Activated T-helper 1 cell treated with anti-CD3 and anti-CD28 coated beads, Interleukin-12 subunit alpha, Interleukin-12 subunit beta, Interleukin-2, Interleukin-4 antibody, amounts not matched to agents 30 ng/mL and 10 ng/mL and 1 ng/mL, durations not matched to agents 14 hours and 24 hours and 36 hours (primary cell): ENCODE measurements at regions of chr12 and their contacts with region 1.

Region 1: GRCh38 chr12:54005853-54006686 is 2.7 kb upstream of the HOXC8 start:
- DNase-seq: peak; percentile 76
- H3K4me3 Mint-ChIP-seq: peak overlapping the region; percentile 83
- H3K27ac Mint-ChIP-seq: no peak overlapping the region
- H3K4me1 Mint-ChIP-seq: peaks cover 32% of the 10 kb centered on the region
- H3K27me3 Mint-ChIP-seq: peaks cover 92% of the 10 kb centered on the region

Region 2: DNA sequence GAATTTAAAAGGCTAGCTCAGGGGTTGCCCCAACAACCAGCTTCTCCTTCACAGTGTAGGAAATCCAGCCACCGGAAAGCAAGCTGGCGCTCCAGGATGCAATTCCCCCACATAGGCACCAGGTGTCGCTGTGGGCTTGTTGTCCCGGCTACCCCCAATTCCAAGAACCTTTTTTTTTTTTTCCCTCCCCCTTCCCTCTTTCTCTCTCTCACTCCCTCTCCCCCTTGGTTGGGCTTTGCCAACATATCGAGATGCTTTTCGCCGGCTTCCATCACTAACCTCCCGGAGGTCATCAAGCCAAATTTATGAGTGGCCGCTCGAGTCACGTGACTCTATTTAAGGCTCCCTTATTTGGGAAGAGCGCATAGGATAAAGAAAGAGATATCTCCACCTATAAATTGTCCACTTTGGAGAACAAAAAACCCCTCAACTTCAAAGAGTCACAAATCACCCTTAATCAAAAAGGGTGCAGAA is 26.6 kb after region 1 on chr12 and contains the start of gene HOXC5:
- intact Hi-C with region 1: loop called (anchors 1 kb)
- DNase-seq: peak; percentile 48
- H3K4me3 Mint-ChIP-seq: peak within 1 kb of the TSS; percentile 49
- H3K27ac Mint-ChIP-seq: peak within 1 kb of the TSS; percentile 52
- H3K4me1 Mint-ChIP-seq: peaks cover 20% of the 10 kb centered on the region
- H3K27me3 Mint-ChIP-seq: peaks cover 79% of the 10 kb centered on the region
- total RNA-seq, gene HOXC5: not detected in 2 replicates

Region 3: DNA sequence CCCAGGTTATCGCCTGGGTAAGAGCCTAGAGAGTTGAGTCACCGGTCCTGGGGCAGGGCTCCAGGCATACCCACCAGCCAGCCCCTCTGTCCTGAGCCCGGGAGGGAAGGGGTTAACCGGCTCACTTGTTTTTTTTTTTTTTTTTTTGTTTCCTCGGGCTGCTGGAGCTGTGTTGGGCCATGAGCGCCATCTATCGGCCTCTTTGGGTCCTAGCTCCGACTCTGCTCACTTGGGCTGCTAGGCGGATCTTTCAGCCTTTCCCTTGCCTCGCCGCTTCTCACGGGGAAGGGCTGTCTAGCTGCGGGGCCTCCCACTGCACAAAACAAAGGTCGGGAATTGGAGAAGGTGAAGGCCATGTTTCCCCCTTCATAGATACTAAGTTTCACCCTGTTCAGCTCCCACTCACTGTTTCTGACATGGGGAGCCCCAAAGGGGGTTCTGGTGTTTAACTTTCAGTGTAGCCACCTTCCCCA is 185.5 kb after region 1 on chr12:
- intact Hi-C with region 1: loop called (anchors 1 kb)
- DNase-seq: peak; percentile 64
- H3K4me3 Mint-ChIP-seq: no peak overlapping the region
- H3K27ac Mint-ChIP-seq: no peak overlapping the region
- H3K4me1 Mint-ChIP-seq: peaks cover 32% of the 10 kb centered on the region
- H3K27me3 Mint-ChIP-seq: peaks cover 43% of the 10 kb centered on the region

Region 4: DNA sequence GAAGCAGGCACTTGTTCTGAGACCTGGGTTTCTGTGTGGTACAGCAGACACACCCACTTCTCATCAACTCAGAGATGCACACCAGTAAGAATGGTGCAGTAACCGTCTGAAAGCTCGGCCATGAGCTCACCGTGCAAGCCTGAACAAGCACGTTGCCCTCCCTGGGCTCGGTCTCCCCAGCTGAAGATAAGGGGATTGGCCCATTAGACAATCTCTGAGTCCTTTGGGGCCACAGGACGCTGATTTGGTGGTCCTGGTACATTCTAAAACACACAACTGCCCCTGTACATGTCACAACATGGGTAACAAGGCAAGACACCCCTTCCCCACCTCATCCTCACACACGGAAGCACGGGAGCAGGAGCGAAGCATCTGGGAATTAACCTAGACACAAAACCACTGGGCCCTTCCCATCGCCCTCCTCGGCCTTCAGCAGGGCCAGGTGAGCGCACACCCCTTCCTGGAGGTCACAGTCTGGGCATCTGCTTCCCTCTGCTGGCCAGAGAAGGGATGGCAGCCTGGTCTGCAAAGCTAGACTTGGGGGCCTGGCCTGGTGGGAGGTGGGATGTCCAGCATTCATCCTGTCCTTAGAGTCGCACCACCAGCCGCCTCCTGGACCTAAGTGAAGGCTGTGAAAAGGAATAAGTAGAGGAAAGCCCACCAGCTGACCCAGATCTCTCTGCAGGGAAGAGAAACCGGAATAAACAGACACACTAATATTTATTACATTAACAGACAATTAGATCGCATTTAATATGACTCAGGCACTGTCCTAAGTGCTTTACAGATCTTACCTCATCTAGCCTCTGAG is 201.6 kb after region 1 on chr12:
- intact Hi-C with region 1: loop called (anchors 1 kb)
- DNase-seq: peak; percentile 66
- H3K4me3 Mint-ChIP-seq: no peak overlapping the region
- H3K27ac Mint-ChIP-seq: no peak overlapping the region
- H3K4me1 Mint-ChIP-seq: no peaks in the 10 kb centered on the region
- H3K27me3 Mint-ChIP-seq: peaks cover 30% of the 10 kb centered on the region

Region 5: DNA sequence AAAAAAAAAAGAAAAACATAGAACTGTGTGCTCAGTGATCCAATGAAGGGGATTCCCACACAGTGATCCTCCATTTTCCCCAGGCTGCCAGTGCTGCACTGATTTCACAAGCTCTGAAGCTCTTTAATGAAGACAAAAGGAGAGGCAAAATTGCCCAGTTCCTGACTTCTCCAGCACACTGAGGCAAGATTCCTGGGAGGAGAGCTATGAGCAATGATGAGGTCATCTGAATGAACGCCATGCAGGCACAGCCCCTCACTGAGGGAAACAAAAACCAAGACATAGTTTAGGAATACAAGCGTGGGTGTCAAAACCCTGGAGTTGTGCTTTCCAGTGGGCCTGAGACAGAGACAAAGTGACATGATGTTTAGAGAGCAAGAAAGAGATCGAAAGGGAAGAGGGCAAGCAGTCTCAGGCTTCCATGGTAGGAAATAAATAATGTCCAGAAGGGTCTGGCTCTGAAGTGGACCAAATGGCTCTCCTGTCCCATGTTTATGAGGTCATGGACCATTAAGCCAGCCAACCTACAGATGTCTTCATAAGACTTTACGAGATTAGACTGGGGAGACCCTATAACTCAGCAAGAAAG is 223.6 kb after region 1 on chr12:
- intact Hi-C with region 1: no loop called
- DNase-seq: no peak
- H3K4me3 Mint-ChIP-seq: no peak overlapping the region
- H3K27ac Mint-ChIP-seq: no peak overlapping the region
- H3K4me1 Mint-ChIP-seq: peaks cover 7% of the 10 kb centered on the region
- H3K27me3 Mint-ChIP-seq: no peaks in the 10 kb centered on the region